ENCODE measurements at regions of chr2 and their contacts with region 1.

Region 1: DNA sequence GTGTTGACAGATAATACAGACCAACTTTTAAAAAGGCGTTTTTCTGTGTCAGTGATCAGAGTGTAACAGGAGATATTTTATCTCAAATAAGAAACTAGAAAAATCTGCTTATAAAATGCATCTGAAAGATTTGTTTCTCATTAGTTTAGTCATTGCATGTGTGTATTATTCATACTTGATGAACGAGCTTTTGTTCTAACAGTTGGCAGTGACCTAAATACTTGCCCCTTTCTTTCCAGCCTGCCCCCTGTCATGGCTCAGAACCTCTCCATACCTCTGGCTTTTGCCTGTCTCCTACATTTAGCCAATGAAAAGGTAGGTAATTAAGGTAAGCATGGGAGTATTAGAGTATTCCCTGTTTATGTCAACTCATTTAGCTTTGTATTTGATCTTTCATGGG is 33.6 kb downstream of the NCAPH start:
- DNase-seq: no peak
- H3K4me3 ChIP-seq: no peak overlapping the region
- H3K27ac ChIP-seq: no peak overlapping the region
- H3K4me1 ChIP-seq: peaks cover 6% of the 10 kb centered on the region
- H3K27me3 ChIP-seq: no peaks in the 10 kb centered on the region
- CTCF ChIP-seq: no peak

Region 2: GRCh38 chr2:96344011-96344410 is 25.2 kb before region 1 on chr2:
- CTCF ChIA-PET with region 1: no interaction called
- POLR2A ChIA-PET with region 1: interaction called, 19 read pairs
- intact Hi-C with region 1: no loop called
- DNase-seq: no peak
- H3K4me3 ChIP-seq: no peak overlapping the region
- H3K27ac ChIP-seq: no peak overlapping the region
- H3K4me1 ChIP-seq: peaks cover 16% of the 10 kb centered on the region
- H3K27me3 ChIP-seq: no peaks in the 10 kb centered on the region
- CTCF ChIP-seq: no peak

Measured in PC-9 (cell line).